Sciatic nerve (tissue), 2 donors: ENCODE measurements at regions of chr3 and their contacts with region 1.

Region 1: GRCh38 chr3:152139651-152140050 is 129.1 kb upstream of the MBNL1 start:
- DNase-seq: no peak
- ATAC-seq: no peak

Region 2: DNA sequence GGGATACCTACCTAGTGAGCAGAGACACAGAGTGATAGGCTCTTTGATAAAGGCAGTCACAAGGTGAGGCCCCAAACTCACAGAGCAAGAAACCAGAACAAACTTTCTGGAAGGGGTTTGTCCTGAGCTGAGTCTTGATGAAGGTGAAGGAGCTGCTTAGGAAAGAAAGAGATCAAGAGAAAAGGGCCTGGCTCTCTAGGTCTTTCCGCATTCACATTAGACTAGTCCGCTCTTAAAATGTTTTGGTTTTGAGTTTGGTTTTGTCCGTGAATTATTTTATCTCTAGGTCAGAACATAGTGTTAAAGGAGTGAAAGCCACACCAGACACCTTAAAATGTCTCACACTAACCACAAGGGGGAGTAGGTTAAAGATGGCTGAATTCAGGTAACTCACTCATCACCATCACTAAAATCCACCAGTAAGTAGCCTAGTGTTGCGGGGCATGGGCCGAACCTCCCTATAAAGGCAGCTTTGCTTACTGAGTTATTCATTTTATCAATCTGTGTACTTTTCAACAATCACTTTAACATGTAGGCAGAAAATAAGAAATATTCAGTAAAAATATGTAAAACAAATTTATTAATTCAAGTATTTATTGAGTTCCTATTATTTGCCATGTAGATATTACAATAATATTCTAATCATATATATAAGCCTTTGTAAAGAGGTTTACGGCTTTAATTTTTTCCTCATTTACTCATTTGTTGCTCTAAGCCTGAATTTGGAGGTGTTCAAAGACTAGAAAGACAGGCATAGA is 1853.1 kb before region 1 on chr3:
- intact Hi-C with region 1: no loop called
- DNase-seq: no peak
- ATAC-seq: peak; percentile 38

Region 3: GRCh38 chr3:152113413-152113812 is 26.2 kb before region 1 on chr3:
- intact Hi-C with region 1: loop called (anchors 1 kb)
- DNase-seq: no peak
- ATAC-seq: no peak